ENCODE measurements at regions of chr7 and their contacts with region 1.

Region 1: GRCh38 chr7:99040104-99040958 is 103.6 kb downstream of the SMURF1 start:
- DNase-seq: peak; percentile 83

Region 2: GRCh38 chr7:99312316-99313203 is 272.2 kb after region 1 on chr7:
- intact Hi-C with region 1: loop called (anchors 1 kb)
- DNase-seq: no peak